ENCODE measurements at regions of chr6 and their contacts with region 1.

Region 1: DNA sequence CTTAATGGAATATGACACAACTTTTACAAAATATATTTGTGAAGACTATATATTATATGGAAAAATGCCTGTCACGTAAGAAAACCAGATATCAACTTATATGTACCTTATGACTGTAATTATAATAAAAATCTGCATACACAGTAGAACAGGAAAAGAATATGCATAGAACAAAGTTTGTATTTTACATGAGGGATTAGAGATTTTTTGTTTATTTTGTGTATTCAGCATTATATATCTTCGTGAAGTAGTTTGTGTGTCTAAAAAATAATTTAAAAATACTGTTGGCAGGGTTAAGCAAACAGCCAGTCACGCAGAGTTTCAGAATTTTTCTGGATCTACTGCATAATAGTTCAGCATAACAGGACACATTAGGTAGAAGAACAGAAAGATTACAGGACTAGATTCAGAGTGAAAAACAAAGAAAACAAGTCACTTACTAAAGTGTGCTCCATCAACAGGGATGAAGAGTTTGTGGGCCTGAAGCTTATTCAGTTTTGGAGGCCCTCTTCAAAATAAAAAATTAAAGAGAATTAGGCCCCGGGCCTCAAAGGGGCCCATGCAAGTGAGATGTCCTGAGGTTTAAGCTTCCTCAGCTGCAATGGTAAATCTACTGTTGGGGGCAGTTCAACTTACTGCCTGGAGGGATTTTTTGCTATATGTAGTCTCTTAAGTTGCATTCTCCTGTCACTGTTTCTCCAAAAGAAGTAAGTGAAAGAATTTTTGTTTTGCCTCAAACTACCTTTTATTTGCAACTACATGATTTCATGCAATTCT is 16.3 kb downstream of the TXLNB start:
- DNase-seq: no peak
- ATAC-seq: no peak
- H3K4me3 ChIP-seq: no peak overlapping the region
- H3K27ac ChIP-seq: no peak overlapping the region
- H3K4me1 ChIP-seq: no peaks in the 10 kb centered on the region
- H3K27me3 ChIP-seq: no peaks in the 10 kb centered on the region
- CTCF ChIP-seq: no peak
- POLR2A ChIP-seq: no peak
- RAD21 ChIP-seq: no peak

Region 2: DNA sequence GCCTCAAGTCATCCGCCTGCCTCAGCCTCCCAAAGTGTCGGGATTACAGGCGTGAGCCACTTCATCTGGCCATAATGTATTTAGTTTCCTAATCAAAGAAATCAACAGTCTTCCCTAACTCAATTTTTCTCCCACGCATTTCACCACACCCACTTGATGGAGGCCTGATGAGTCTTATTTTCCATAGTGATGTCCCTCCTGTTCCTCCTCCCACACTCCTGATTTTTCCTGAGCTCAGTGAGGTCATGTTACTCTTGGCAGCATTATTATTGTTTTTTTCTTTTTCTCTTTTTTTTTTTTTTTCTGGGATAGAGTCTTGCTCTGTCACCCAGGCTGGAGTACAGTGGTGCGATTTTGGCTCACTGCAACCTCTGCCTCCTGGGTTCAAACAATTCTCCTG is 238.0 kb before region 1 on chr6:
- CTCF ChIA-PET with region 1: no interaction called
- POLR2A ChIA-PET with region 1: no interaction called
- RAD21 ChIA-PET with region 1: no interaction called
- intact Hi-C with region 1: no loop called
- DNase-seq: no peak
- ATAC-seq: no peak
- H3K4me3 ChIP-seq: no peak overlapping the region
- H3K27ac ChIP-seq: no peak overlapping the region
- H3K4me1 ChIP-seq: peaks cover 0 to 3% of the 10 kb centered on the region in 2 experiments; a peak in 1 of 4 replicates
- H3K27me3 ChIP-seq: no peaks in the 10 kb centered on the region
- CTCF ChIP-seq: no peak
- POLR2A ChIP-seq: no peak
- RAD21 ChIP-seq: no peak

Region 3: DNA sequence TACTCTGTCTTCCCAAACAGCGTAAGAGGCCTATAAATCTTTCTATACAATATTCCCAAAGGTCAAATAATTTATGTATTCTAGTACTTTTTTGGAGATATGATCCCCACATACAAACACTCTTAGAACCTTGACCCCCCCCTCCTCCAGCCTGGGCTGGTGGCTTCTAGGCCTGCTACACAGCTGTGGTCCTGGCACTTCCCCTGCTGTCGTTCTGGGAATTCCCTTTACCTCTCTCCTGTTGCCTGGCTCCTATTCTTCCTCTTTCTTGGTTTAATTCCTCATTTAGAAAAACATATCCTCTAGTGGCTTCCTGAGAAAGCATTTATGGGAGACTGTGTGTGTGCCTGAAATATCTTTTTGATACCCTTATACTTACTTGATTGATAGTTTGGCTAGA is 20.4 kb after region 1 on chr6:
- CTCF ChIA-PET with region 1: no interaction called
- POLR2A ChIA-PET with region 1: no interaction called
- RAD21 ChIA-PET with region 1: no interaction called
- intact Hi-C with region 1: loop called (anchors 2 kb)
- DNase-seq: no peak
- ATAC-seq: no peak
- H3K4me3 ChIP-seq: no peak overlapping the region
- H3K27ac ChIP-seq: no peak overlapping the region
- H3K4me1 ChIP-seq: peaks cover 5 to 12% of the 10 kb centered on the region in 2 experiments; a peak in 3 of 4 replicates
- H3K27me3 ChIP-seq: no peaks in the 10 kb centered on the region
- CTCF ChIP-seq: no peak
- POLR2A ChIP-seq: no peak
- RAD21 ChIP-seq: no peak

Measured in HCT116 (cell line).